ENCODE measurements at regions of chr6 and their contacts with region 1.

Region 1: DNA sequence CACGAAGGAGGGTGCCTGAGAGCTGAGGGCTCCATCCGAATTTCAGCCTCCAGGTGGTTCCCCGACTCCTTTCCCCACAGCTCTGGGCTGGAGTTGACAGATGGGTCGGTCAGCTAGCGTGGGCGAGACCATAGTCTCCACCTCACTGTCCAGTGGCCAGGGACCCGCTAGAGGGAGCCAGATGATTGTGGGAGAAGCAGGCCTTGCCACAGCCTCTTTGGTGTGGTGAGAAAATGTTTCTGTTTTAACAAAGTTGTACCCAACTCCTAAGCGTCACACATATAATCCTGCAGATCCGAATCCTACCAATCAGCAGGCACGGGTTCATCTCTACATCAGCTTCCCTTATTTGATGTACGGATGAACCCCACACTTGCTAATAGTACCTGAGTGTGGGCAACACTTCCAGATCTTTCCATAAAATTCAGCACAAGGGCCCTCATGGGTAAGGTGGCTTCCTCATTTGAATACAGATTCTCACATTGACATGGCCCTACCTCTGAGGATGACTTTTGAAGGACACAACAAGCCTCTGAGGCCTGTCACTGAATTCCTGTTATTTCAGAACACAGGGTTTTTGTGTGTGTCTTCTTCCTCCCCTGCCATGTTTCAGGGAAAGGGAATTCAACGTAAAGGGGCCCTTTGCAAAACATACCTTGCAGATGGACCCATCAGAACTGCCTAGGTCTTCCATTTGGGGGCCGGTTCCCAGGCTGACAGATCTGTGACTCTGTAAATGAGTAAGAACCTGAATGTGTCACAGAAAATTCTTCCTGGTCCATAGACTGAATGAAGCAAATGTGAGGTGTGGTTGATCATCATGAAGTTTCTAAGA is 103.2 kb upstream of the DUSP22 start:
- DNase-seq: peak; percentile 93
- H3K4me3 Mint-ChIP-seq: peak overlapping the region; percentile 1
- H3K27ac Mint-ChIP-seq: peak overlapping the region; percentile 64
- H3K4me1 Mint-ChIP-seq: peaks cover 44% of the 10 kb centered on the region
- H3K27me3 Mint-ChIP-seq: peaks cover 2% of the 10 kb centered on the region

Region 2: GRCh38 chr6:209432-210103 is 20.5 kb after region 1 on chr6:
- CTCF ChIA-PET with region 1: interaction called, 5 read pairs
- POLR2A ChIA-PET with region 1: interaction called, 9 read pairs
- intact Hi-C with region 1: loop called (anchors 1 kb)
- DNase-seq: peak; percentile 90
- H3K4me3 Mint-ChIP-seq: peak overlapping the region; percentile 66
- H3K27ac Mint-ChIP-seq: peak overlapping the region; percentile 73
- H3K4me1 Mint-ChIP-seq: peaks cover 30% of the 10 kb centered on the region
- H3K27me3 Mint-ChIP-seq: peaks cover 33% of the 10 kb centered on the region

Region 3: DNA sequence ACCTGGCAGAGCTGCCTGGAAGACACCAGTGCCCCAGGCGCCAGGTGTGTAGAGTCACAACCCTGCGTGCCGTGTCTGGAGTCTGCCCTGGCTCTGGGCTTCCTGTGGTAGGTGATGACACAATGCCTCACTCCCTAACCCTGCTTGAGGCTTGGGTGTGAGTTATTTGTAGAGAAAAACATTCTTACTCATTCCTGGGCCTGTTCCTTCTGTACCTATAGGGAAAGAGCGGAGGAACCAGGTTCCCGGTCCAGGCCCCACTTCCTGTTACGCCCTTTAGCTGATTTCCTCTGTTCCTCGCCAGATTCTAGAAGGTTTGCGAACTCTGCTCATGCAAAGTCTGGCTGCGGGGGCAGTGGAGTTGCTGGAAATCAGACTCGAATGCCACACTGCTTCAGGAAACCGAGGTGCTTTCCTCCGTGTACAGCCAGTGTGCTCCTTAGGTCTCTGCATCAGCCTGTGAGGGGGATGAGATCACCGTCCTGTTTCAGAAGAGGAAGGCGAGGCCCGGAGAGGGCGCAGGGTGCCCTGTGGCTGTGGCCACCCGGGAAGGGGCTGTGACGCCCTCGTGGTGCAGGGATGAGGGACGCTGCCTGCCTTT is 36.2 kb after region 1 on chr6:
- CTCF ChIA-PET with region 1: interaction called, 8 read pairs
- POLR2A ChIA-PET with region 1: interaction called, 24 read pairs
- intact Hi-C with region 1: loop called (anchors 1 kb)
- DNase-seq: peak; percentile 90
- H3K4me3 Mint-ChIP-seq: peak overlapping the region; percentile 54
- H3K27ac Mint-ChIP-seq: peak overlapping the region; percentile 96
- H3K4me1 Mint-ChIP-seq: peaks cover 72% of the 10 kb centered on the region
- H3K27me3 Mint-ChIP-seq: peaks cover 12% of the 10 kb centered on the region

Region 4: DNA sequence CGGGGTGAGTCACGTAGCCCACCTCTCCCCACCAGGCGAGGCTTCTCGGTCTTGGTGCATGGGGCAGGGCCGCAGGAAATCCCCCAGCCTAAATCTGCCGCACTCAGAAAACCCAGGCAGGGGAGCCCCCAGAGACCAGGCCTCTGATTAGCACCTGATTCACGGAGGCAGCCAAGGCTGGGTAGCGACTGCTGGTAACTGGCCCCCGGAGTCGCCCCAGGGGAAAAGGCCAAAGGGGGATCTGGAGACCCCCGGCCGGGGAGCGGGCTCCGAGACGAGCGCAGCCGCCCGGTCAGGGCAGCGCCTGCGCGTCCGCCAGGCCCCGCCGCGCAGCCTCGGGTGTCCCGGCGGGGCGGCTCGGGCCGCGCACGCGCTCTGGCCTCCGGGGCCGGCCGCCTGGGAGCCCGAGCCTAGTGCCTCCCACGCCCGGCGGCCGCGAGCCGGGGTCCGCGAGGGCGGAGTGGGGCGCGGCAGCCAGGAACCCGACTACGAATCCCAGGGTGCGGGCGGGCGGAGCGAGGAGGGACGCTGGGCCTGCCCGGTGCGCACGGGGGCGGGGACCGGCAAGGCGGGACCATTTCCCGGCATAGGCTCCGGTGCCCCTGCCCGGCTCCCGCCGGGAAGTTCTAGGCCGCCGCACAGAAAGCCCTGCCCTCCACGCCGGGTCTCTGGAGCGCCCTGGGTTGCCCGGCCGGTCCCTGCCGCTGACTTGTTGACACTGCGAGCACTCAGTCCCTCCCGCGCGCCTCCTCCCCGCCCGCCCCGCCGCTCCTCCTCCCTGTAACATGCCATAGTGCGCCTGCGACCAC is 102.9 kb after region 1 on chr6 and contains the start of gene DUSP22:
- CTCF ChIA-PET with region 1: interaction called, 3 read pairs
- POLR2A ChIA-PET with region 1: interaction called, 3 read pairs
- intact Hi-C with region 1: loop called (anchors 1 kb)
- DNase-seq: peak; percentile 87
- H3K4me3 Mint-ChIP-seq: peak within 1 kb of the TSS; percentile 91
- H3K27ac Mint-ChIP-seq: peak within 1 kb of the TSS; percentile 92
- H3K4me1 Mint-ChIP-seq: peaks cover 43% of the 10 kb centered on the region
- H3K27me3 Mint-ChIP-seq: peaks cover 1% of the 10 kb centered on the region
- total RNA-seq, gene DUSP22: 28.0 to 28.7 TPM

Region 5: DNA sequence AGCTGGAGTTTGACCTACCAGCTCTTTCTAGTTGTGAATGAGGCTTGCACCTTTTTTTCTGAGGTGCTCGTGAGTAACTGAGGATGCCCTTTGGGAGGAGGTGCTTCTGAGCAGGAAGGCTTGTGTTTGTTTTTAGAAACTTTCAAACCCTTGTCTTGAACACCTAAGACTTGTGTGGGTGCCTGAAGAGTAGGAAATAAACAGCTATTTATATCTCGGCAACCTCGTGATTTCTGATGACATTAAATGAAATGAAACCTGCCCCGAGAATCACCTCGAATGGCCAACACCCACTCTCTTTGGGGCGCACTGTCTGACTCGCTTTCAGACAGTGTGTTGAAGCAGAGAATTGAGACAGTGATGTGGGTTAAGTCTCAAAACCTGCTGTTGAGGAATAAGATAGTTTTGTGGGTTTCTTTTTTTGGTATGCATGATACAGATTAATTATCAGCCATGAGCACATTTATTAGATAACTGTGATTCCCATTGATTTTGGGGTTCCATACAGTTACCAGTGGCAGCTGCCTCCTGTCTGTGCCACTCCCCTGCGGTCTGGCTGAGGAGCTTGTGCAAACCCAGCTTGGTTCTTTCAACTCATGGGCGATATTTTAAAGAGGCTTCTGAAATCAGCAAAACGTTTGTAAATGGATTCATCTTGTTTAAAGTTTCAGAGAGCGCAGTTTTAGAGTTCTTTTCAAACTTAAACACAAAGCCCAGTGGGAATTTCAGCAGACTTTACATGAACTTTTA is 210.9 kb after region 1 on chr6:
- CTCF ChIA-PET with region 1: interaction called, 14 read pairs
- POLR2A ChIA-PET with region 1: interaction called, 9 read pairs
- intact Hi-C with region 1: no loop called
- DNase-seq: peak; percentile 76
- H3K4me3 Mint-ChIP-seq: peak overlapping the region; percentile 64
- H3K27ac Mint-ChIP-seq: peak overlapping the region; percentile 88
- H3K4me1 Mint-ChIP-seq: peaks cover 94% of the 10 kb centered on the region
- H3K27me3 Mint-ChIP-seq: no peaks in the 10 kb centered on the region

Region 6: GRCh38 chr6:453152-453551 is 264.1 kb after region 1 on chr6:
- CTCF ChIA-PET with region 1: no interaction called
- POLR2A ChIA-PET with region 1: no interaction called
- intact Hi-C with region 1: no loop called
- DNase-seq: no peak
- H3K4me3 Mint-ChIP-seq: no peak overlapping the region
- H3K27ac Mint-ChIP-seq: no peak overlapping the region
- H3K4me1 Mint-ChIP-seq: peaks cover 31% of the 10 kb centered on the region
- H3K27me3 Mint-ChIP-seq: no peaks in the 10 kb centered on the region

Region 7: GRCh38 chr6:551405-551804 is 362.4 kb after region 1 on chr6:
- CTCF ChIA-PET with region 1: interaction called, 5 read pairs
- POLR2A ChIA-PET with region 1: no interaction called
- intact Hi-C with region 1: loop called (anchors 2 kb)
- DNase-seq: peak; percentile 68
- H3K4me3 Mint-ChIP-seq: no peak overlapping the region
- H3K27ac Mint-ChIP-seq: peak overlapping the region; percentile 97
- H3K4me1 Mint-ChIP-seq: peaks cover 69% of the 10 kb centered on the region
- H3K27me3 Mint-ChIP-seq: no peaks in the 10 kb centered on the region

Region 8: DNA sequence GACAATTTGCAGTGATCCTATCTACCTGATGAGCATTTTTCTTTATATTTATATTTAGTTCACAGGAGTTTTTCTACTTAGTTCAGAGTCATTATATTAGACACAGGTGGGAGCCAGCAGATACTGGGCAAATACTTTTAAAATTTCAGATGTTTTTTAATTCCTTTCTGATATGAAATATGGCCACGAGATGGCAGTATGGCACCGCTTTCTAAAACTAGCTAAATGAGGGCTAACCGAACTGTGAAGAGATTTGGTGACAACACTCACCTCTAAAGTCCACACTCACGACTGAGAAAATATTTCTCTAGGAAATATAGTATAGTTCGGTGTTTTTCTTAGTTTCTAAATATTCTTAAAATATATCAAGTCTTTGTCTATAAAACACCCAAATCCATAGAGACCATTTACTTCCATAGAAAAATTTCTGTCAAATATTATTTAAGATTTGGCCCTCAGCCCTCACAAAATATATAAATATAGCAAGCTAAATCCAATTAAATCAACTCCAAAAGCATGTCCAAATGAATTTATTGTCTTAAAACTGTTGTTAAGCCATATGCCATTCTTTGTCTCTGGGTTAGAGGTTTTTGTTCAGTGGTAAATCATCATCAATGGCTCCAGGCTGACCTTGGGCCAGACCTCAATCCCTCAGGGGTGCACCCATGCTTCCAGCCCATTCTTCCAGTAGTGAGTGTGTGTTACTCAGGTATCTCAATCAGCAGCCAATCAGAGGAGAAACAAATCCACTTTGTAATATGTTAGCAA is 404.3 kb after region 1 on chr6:
- CTCF ChIA-PET with region 1: interaction called, 8 read pairs
- POLR2A ChIA-PET with region 1: no interaction called
- intact Hi-C with region 1: loop called (anchors 1 kb)
- DNase-seq: peak; percentile 75
- H3K4me3 Mint-ChIP-seq: no peak overlapping the region
- H3K27ac Mint-ChIP-seq: no peak overlapping the region
- H3K4me1 Mint-ChIP-seq: peaks cover 5% of the 10 kb centered on the region
- H3K27me3 Mint-ChIP-seq: no peaks in the 10 kb centered on the region